Sciatic nerve (tissue), 2 donors: ENCODE measurements at regions of chr22 and their contacts with region 1.

Region 1: DNA sequence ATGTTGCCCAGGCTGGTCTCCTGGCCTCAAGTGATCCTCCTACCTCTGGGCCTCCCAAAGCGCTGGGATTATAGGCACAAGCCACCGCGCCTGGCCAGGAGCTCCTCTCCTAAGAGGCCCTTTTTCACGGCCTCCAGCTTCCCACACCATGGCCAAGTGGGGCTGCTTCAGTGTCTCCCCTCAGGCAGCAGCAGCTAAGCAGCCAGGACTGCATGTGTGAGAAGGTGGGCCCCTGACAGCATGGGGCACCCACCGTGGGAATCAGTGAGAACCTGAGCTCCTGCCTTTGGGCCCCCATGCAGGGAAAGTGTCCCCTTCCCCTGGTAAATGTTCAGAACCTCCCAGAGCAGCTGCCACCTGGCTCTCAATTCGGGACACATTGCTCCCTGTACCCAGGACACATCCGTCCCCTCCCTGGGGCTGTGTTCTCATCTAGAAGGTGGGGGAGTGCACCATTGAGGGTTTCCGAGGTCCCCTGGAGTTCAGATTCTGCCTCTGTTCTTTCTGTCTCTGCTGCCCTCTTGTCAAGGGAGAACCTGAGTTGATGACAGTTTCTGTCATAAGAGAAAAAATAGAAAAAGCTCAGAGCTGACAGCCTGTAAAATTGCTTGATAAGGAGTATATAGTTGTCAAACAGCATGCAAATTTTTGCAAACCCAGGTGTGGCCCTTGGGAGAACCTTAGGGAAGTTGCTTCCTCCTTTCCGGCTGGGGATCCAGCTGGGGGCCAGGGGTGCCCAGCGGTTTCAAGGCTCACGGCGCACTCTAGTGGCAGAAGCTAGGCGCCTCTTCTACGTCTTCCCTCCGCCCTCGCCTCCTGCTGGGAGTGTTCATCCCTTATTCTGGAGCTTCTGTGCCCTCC is 29.7 kb downstream of the FAM83F start:
- DNase-seq: peak; percentile 85
- ATAC-seq: peak; percentile 86

Region 2: DNA sequence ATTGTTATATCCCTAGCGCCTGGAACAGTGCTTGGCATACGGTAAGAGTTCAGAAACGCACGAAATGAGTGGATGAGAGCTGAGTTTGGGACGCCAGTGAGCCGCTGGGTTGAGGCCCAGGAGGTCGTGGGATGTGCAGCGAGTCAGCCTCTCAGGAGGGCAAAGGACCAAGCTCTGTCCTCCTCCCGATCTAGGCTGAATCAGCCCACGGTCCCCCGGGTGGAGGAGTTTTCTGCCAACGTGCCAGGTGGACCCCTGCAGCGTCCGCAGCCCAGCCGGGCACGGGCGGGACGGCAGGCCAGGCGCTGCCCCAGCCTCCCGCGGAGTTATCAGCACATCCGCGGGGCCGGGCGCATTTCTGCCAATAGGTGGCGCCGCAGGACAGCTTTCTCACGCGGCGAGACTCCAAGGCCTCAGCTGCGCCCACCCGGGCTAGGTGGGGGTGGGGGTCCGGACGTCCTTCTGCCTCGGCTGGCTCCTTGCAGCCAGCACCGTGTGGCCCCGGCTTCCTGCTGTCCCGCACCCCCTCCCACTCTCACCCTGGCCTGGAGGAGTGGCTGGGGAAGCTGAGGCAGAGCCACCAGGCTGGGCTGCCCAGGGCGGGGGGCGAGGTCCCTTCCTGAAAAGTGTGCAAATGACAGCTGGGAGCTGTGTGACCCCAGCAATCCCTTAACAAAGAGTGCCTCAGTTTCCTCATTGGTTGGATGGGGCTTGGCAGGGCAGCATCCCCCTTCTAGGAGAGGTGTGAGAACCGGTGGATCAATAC is 489.7 kb before region 1 on chr22:
- intact Hi-C with region 1: loop called (anchors 5 kb)
- DNase-seq: peak; percentile 93
- ATAC-seq: peak; percentile 47

Region 3: GRCh38 chr22:39559454-39560105 is 464.9 kb before region 1 on chr22:
- intact Hi-C with region 1: loop called (anchors 5 kb)
- DNase-seq: no peak
- ATAC-seq: no peak

Region 4: GRCh38 chr22:39622881-39623367 is 401.5 kb before region 1 on chr22:
- intact Hi-C with region 1: loop called (anchors 10 kb)
- DNase-seq: peak; percentile 79
- ATAC-seq: peak; percentile 65